BJ (cell line): ENCODE measurements at regions of chr6 and their contacts with region 1.

Region 1: DNA sequence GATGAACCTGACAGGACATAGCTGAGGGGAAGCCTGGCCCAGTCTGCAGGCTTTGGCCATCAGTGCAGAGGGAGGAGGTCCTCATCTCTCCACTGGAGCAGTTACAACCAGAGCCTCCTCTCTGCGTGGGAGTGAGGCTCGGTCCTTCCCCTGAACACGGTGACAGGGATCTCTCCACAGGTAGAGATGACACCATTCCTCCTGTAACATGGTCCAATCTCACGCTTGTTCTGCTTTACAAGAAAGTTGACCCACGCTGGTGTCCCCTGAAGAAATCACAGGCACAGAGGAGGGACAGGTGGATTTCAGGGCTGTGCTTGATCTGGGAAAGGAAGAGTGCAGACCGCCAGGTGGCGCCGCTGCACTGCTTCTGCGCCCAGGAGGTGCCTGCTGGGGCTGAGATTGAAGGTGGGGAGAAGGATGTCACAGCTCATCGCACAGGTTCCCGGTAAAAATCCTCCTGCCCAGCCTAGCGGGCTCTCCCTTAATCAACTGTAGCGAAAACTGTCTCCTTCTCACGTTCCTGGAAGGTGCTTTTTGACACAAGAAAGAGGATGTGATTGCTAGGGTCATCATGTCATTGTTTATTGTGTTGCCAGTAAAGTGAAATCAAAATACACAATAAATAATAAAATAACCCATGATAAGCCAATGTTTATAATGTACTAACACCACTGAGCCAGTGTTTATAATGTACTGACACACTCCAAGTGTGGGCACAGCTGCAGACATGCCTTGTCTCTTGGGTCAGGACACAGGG is 20.4 kb downstream of the HLA-G start:
- DNase-seq: no peak
- H3K4me3 ChIP-seq: no peak overlapping the region
- H3K27me3 ChIP-seq: peaks cover 31% of the 10 kb centered on the region
- CTCF ChIP-seq: peak; percentile 94

Region 2: DNA sequence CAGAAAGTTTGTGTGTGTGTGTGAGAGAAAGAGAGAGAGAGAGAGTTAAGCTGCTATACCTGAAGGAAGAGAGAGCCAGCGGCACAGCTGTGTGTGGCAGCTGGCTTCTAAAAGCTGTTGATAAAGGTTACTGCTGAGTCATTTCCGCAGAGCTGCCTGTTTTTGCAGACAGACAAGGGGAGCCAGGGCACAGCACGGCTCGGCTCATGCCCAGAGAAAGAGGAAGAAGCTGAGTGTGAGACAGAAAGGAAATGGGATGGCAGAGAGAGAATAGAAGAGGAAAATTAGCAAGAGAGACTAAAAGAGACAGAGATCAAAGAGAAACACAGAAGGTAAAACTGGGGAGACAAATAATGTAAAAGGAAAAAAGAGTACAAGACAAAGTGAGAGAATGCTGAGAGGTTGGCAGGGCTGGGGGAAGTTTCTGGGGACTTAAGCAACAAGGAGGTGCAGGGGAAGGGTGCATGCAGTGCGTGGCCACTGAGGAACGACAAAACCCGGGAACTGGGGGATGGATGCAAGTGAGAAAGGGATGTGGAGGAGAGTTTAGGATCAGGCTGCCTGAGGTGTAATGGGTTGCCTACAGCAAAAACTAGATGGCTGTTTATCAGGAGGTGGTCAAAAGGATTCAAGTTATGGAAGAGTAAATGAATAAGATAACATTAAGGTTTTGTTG is 117.0 kb after region 1 on chr6:
- CTCF ChIA-PET with region 1: interaction called, 14 read pairs
- POLR2A ChIA-PET with region 1: no interaction called
- DNase-seq: no peak
- H3K4me3 ChIP-seq: peak overlapping the region; percentile 20
- H3K27me3 ChIP-seq: no peaks in the 10 kb centered on the region
- CTCF ChIP-seq: no peak

Region 3: GRCh38 chr6:30006170-30007131 is 158.4 kb after region 1 on chr6:
- CTCF ChIA-PET with region 1: interaction called, 92 read pairs
- POLR2A ChIA-PET with region 1: no interaction called
- DNase-seq: no peak
- H3K4me3 ChIP-seq: peak overlapping the region; percentile 41
- H3K27me3 ChIP-seq: peaks cover 23% of the 10 kb centered on the region
- CTCF ChIP-seq: no peak

Region 4: GRCh38 chr6:30013291-30013922 is 165.4 kb after region 1 on chr6:
- CTCF ChIA-PET with region 1: interaction called, 92 read pairs
- POLR2A ChIA-PET with region 1: no interaction called
- DNase-seq: no peak
- H3K4me3 ChIP-seq: no peak overlapping the region
- H3K27me3 ChIP-seq: 0 out of 2 replicates have a peak, but pooled peaks cover 2% of the 10 kb centered on the region
- CTCF ChIP-seq: peak; percentile 88

Region 5: DNA sequence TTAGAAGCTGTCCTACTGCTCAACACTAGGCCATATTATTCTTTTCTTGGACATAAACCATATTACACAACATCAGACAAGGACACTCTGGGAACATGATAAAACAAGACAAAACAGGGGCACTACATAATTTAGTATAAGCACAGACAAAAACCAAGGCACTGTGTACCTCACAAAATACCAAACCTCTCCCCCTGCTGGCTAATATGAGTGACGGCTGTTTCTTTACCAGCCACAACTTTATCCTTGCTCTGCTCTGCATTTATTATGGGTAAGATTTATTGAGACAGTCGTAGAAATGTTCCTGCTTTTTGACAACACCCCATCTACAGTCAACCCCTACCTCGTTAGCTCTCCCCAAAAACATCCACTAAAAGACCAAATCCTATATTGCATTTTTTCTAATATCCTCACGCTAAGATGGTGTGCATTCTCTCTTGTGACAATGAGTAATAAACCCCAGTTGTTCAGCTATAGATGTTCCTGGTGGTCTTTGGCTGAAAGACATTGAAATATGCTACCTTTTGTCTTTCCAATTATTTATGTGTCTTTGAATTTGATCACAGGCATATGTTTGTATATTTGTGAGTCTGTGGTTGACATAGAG is 189.2 kb after region 1 on chr6:
- CTCF ChIA-PET with region 1: interaction called, 10 read pairs
- POLR2A ChIA-PET with region 1: no interaction called
- DNase-seq: no peak
- H3K4me3 ChIP-seq: no peak overlapping the region
- H3K27me3 ChIP-seq: no peaks in the 10 kb centered on the region
- CTCF ChIP-seq: peak; percentile 54

Region 6: GRCh38 chr6:30130887-30131862 is 283.1 kb after region 1 on chr6:
- CTCF ChIA-PET with region 1: interaction called, 14 read pairs
- POLR2A ChIA-PET with region 1: no interaction called
- DNase-seq: no peak
- H3K4me3 ChIP-seq: no peak overlapping the region
- H3K27me3 ChIP-seq: peaks cover 27% of the 10 kb centered on the region
- CTCF ChIP-seq: peak; percentile 99